Prostate gland (tissue), 2 donors: ENCODE measurements at regions of chr5 and their contacts with region 1.

Region 1: GRCh38 chr5:902129-902916 is 9.6 kb downstream of the TRIP13 start:
- DNase-seq: no peak
- H3K4me3 ChIP-seq: no peak overlapping the region
- H3K27ac ChIP-seq: no peak overlapping the region
- H3K4me1 ChIP-seq: no peaks in the 10 kb centered on the region
- H3K27me3 ChIP-seq: no peaks in the 10 kb centered on the region
- CTCF ChIP-seq: no peak
- POLR2A ChIP-seq: no peak

Region 2: DNA sequence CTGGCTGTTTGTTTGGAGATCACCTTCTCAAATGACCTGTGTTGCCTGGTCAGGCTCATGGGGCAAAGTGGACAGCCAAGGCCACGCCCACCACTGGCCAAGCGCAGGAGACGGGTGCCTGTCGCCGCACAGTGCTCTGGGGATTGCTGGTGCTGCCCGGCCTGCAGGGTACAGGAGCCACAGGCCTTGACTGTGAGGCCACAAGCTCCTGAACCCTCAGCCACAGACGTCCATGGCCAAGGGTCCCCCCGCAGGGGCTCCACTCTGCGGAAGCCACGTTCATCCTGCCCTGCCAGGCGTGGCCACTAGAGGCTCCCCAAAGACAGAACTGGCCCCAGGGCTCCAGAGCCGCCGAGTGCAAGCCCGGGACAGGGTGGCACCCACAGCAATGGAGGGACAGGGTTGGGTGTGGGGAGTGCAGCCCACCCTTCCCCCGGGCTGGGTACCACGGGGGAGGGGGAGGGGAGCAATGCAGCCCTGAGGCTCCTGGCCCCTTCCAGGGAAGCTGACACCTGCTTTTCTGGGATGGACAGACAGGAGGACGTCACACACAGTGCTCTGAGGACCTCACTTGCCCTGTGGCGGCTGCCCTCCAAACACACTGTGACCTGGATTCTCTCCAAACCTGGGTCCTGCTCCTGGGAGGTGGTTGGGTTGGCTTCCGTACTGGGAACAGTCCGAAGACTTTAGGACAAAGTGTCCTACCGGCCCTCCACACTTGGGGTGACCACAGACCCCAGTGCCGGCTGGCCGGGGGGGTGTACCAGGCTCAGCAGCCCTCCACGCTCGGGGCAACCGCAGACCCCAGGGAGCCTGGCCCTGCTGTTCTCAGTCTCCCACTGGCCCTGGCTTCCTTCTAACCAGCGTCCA is 230.6 kb before region 1 on chr5:
- intact Hi-C with region 1: loop called (anchors 2 kb)
- DNase-seq: peak; percentile 51
- H3K4me3 ChIP-seq: no peak overlapping the region
- H3K27ac ChIP-seq: no peak overlapping the region
- H3K4me1 ChIP-seq: peaks cover 16% of the 10 kb centered on the region
- H3K27me3 ChIP-seq: peaks cover 7% of the 10 kb centered on the region
- CTCF ChIP-seq: peak; percentile 73 to 92 (median 84)
- POLR2A ChIP-seq: no peak

Region 3: DNA sequence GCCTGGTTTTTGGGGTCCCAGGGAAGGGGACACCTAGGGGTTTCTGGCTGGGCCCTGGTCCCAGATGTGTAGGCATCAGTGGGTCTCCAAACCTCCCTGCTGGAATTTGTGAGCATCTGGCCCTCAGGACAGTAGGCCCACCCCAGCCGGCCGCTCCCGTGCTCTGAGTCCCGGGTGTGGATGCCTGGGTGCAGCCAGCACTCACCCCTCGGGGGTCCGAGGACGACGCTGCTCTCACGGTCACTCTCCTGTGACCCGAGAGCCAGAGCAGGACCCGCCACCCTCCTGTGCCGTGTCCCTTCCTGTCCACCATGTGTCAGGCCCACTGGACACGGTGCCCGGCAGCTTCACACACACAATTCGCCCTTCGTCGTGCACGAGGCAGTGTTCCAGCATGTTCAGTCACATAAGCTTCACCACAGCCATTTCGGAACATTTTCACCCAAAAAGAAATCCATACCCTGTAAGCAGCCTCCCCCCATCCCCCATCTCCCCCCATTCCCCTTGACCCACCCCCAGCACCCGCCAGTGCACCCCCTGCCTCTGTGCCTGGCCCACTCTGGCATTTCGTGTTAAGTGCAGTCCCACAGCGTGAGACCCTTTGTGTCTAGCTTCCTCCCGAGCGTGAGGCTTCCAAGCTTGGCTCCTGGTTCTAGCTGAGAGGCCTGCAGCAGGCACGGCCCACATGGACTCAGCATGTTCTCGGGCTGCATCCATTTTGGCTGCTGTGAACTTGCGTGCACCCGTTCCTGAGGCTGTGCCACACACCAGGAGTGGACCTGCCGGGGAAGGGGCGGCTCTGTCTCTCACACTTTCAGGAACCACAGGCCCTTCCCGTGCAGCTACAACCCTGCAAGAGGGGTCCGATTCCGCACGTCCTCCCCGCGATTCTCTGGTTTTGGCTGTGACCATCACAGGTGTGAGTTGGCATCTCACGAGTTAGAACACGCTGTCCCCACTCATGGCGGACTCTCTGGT is 146.8 kb after region 1 on chr5:
- intact Hi-C with region 1: no loop called
- DNase-seq: no peak
- H3K4me3 ChIP-seq: no peak overlapping the region
- H3K27ac ChIP-seq: no peak overlapping the region
- H3K4me1 ChIP-seq: no peaks in the 10 kb centered on the region
- H3K27me3 ChIP-seq: no peaks in the 10 kb centered on the region
- CTCF ChIP-seq: no peak
- POLR2A ChIP-seq: no peak